ENCODE measurements at regions of chr6 and their contacts with region 1.

Region 1: GRCh38 chr6:26485112-26485780 is 14.9 kb upstream of the BTN1A1 start:
- DNase-seq: no peak
- H3K4me3 ChIP-seq: no peak overlapping the region
- H3K27ac ChIP-seq: no peak overlapping the region
- H3K4me1 ChIP-seq: no peaks in the 10 kb centered on the region
- H3K27me3 ChIP-seq: no peaks in the 10 kb centered on the region
- CTCF ChIP-seq: no peak
- EP300 ChIP-seq: no peak
- POLR2A ChIP-seq: no peak
- RAD21 ChIP-seq: no peak

Region 2: GRCh38 chr6:26473758-26474438 is 11.3 kb before region 1 on chr6:
- CTCF ChIA-PET with region 1: no interaction called
- POLR2A ChIA-PET with region 1: interaction called, 10 read pairs
- DNase-seq: peak; percentile 23 to 71
- H3K4me3 ChIP-seq: peak overlapping the region; percentile 2 to 62 (median 40); a peak in 6 of 8 replicates
- H3K27ac ChIP-seq: peak overlapping the region; percentile 30
- H3K4me1 ChIP-seq: peaks cover 6 to 14% (median 10%) of the 10 kb centered on the region in 4 experiments; a peak in 5 of 7 replicates
- H3K27me3 ChIP-seq: no peaks in the 10 kb centered on the region
- CTCF ChIP-seq: no peak
- EP300 ChIP-seq: no peak
- POLR2A ChIP-seq: peak in 1 of 2 experiments; percentile 74; a peak in 2 of 3 replicates
- RAD21 ChIP-seq: no peak

Measured in H1 (cell line).